Activated CD4-positive, alpha-beta T cell treated with anti-CD3 and anti-CD28 coated beads for 36 hours (primary cell): ENCODE measurements at regions of chr10 and their contacts with region 1.

Region 1: DNA sequence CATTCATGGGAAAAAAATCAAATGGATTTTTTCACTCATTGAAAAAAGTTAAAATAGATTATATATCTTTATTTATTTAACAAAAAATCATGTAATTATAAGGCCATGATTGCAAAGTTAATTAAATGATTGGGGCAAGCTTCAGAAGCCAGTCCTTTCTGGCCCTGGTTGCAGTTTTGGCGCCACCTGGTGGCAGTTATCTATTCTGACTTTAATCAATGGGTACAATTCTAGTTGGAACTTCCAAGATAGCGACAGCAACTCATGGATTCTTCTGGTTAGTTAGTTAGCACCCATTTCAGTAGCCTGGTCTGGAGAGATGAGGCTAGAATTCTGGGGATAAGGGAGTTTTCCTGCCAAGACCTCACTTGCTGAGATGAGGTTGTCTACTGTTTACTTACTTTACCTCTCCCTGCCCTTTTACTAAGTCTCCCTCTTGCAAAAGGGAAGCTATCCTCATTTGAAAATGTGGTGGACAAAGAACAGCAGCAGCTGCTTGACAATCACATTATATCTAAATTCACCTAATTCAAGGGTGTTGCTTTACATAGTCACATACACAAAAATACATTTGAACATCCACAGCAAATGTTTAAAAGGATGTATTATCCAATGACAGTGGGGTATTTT is 42.3 kb downstream of the NOC3L start:
- DNase-seq: peak; percentile 82
- ATAC-seq: no peak
- H3K4me3 Mint-ChIP-seq: no peak overlapping the region
- H3K27ac Mint-ChIP-seq: no peak overlapping the region
- H3K4me1 Mint-ChIP-seq: no peaks in the 10 kb centered on the region
- H3K27me3 Mint-ChIP-seq: no peaks in the 10 kb centered on the region

Region 2: DNA sequence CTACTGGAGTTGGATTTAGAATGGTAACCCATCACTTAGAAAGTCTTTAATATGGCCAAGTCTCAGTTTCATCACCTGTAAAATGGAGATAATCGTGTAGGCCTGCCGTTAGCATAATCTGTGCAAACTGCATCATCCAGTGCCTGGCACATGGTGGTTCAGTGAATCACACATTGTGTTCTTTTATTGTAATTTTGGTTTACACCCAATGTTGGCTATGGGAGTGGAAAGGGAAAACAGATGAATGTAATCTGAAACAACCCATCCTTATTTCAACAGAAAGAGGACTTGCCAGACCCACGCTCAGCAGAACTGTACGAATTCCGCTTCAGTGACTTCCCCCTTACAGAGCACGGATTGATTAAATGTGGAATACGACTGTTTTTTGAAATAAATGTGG is 680.6 kb before region 1 on chr10:
- CTCF ChIA-PET with region 1: no interaction called
- POLR2A ChIA-PET with region 1: no interaction called
- intact Hi-C with region 1: no loop called
- DNase-seq: no peak
- ATAC-seq: no peak
- H3K4me3 Mint-ChIP-seq: no peak overlapping the region
- H3K27ac Mint-ChIP-seq: no peak overlapping the region
- H3K4me1 Mint-ChIP-seq: no peaks in the 10 kb centered on the region
- H3K27me3 Mint-ChIP-seq: peaks cover 19% of the 10 kb centered on the region

Region 3: DNA sequence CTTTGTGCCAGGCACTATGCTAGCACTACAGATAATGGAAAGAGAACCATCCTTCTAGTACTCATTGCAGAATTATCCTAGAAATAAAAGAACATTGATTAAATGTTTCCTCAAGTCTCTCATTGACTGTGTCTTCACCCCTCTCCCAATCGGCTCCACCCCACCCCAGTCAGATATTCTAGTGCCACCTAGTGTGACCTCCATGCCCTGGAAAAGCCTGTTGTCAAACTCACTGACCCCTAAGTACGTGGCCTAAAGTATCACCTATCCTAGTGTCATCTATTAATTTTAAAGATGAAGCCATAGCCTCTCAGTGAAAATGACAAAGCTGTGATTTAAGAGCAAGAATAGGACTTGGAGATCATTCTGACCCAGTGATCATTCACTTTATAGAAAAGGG is 536.3 kb before region 1 on chr10:
- CTCF ChIA-PET with region 1: no interaction called
- POLR2A ChIA-PET with region 1: no interaction called
- intact Hi-C with region 1: no loop called
- DNase-seq: no peak
- ATAC-seq: no peak
- H3K4me3 Mint-ChIP-seq: no peak overlapping the region
- H3K27ac Mint-ChIP-seq: no peak overlapping the region
- H3K4me1 Mint-ChIP-seq: no peaks in the 10 kb centered on the region
- H3K27me3 Mint-ChIP-seq: peaks cover 4% of the 10 kb centered on the region

Region 4: DNA sequence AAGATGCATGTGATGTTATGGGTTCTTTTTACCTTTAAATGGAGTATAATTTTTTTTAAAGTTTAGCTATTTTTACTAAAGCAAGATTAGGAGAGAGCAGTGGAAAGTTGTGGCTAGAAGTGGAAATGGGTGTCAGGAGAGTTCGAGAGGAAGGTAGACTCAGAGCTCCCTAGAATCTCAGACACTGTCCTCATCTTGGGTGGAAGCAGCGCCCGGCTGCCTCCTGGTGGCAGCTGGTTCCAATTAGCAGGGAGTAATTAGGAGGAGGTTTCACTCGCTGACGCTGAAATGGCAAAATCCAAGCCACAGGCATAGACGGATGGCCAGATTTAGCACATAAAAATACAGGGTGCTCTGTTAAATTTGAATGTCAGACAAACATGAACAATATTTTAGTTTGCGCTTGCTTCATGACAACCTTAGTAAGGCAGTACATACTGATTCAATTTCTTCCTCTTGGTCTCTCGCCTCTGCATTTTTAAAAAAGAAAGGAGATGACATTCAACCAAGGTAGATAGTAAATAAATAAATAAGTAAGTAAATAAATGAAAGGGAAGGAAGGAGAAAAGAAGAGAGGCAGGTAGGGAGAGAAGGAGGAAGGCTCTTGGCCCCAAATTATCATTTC is 504.2 kb before region 1 on chr10:
- CTCF ChIA-PET with region 1: interaction called, 6 read pairs
- POLR2A ChIA-PET with region 1: no interaction called
- intact Hi-C with region 1: loop called in 1 of 2 experiments (anchors 5 kb)
- DNase-seq: peak; percentile 66
- ATAC-seq: peak; percentile 72
- H3K4me3 Mint-ChIP-seq: no peak overlapping the region
- H3K27ac Mint-ChIP-seq: no peak overlapping the region
- H3K4me1 Mint-ChIP-seq: no peaks in the 10 kb centered on the region
- H3K27me3 Mint-ChIP-seq: peaks cover 34% of the 10 kb centered on the region

Region 5: GRCh38 chr10:94279835-94280709 is 40.3 kb before region 1 on chr10:
- CTCF ChIA-PET with region 1: interaction called, 14 read pairs
- POLR2A ChIA-PET with region 1: no interaction called
- intact Hi-C with region 1: loop called (anchors 1 kb)
- DNase-seq: peak; percentile 78
- ATAC-seq: peak; percentile 71
- H3K4me3 Mint-ChIP-seq: no peak overlapping the region
- H3K27ac Mint-ChIP-seq: no peak overlapping the region
- H3K4me1 Mint-ChIP-seq: no peaks in the 10 kb centered on the region
- H3K27me3 Mint-ChIP-seq: peaks cover 20% of the 10 kb centered on the region

Region 6: DNA sequence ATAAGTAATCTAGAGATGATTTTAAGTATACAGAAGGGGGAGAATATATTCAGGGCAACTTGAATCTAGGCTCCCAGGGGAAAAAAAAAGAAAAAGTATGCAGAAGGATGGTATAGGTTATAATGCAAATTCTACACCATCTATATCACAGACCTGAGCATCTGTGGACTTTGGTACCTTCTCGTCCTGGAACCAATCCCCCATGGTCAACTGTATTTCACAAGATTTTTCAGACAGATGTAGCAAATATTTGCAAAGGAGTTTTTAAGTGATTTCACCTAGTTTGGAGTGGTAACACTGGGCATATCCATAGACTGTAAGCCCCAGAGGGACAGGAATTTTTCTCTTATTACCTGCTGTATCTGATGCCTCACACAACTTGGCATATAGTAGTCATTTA is 16.5 kb before region 1 on chr10:
- CTCF ChIA-PET with region 1: interaction called, 11 read pairs
- POLR2A ChIA-PET with region 1: no interaction called
- intact Hi-C with region 1: no loop called
- DNase-seq: no peak
- ATAC-seq: no peak
- H3K4me3 Mint-ChIP-seq: no peak overlapping the region
- H3K27ac Mint-ChIP-seq: no peak overlapping the region
- H3K4me1 Mint-ChIP-seq: peaks cover 11% of the 10 kb centered on the region
- H3K27me3 Mint-ChIP-seq: peaks cover 30% of the 10 kb centered on the region

Region 7: DNA sequence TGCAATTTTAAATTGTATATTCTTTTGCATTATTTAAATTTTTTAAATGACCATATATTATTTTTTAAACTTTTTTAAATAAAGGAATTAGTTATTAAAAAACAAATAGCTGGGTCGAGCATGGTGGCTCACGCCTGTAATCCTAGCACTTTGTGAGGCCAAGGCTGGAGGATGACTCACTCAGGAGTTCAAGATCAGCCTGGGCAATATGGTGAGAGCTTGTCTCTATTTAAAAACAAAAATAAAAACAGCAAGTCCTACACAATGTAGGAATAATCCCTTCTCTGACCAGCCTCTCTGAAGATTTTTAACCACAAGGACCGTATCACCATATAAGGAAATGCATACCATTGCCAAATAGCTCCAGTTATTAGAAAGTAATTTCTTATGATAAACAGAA is 22.8 kb after region 1 on chr10:
- CTCF ChIA-PET with region 1: interaction called, 13 read pairs
- POLR2A ChIA-PET with region 1: no interaction called
- intact Hi-C with region 1: no loop called
- DNase-seq: no peak
- ATAC-seq: no peak
- H3K4me3 Mint-ChIP-seq: no peak overlapping the region
- H3K27ac Mint-ChIP-seq: no peak overlapping the region
- H3K4me1 Mint-ChIP-seq: no peaks in the 10 kb centered on the region
- H3K27me3 Mint-ChIP-seq: no peaks in the 10 kb centered on the region